BJ (cell line): ENCODE measurements at regions of chr1 and their contacts with region 1.

Region 1: DNA sequence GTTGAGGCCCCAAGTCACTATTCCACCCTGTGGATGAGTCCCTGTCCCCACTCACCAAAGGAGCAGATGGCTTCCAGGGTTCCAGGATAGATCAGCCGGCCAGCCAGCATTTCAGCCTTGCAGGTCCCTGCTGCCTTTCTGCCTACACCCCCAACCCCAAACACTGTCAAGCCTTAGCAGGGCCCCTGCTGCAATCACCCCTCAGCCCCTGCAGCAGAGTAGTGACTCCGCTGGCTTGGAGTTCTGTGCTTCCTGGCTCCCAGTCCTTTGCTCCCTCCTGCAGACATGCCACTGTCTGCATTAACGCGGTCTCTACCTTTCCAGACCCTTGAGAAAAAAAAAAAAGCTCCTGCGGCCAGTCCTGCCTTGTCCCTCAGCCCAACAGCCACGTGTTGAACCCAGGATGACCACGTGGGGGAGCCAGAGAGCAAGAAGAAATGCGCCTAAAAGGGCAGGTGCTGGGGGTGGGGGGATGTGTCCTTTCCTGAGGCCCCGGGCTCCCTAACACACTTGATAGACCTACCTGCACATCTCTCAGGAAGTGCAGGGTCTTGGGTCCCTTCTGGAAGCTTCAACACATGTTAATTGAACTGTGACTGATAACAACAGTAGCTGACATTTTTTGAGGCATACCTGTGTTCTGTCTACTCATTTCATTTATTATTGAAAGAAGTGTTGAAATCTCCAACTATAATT is 37.4 kb downstream of the RASSF5 start:
- DNase-seq: no peak
- H3K4me3 ChIP-seq: no peak overlapping the region
- H3K27me3 ChIP-seq: peaks cover 3% of the 10 kb centered on the region; the same call in 1 of the 2 replicates
- CTCF ChIP-seq: peak; percentile 94

Region 2: GRCh38 chr1:206489980-206490770 is 54.5 kb before region 1 on chr1:
- CTCF ChIA-PET with region 1: interaction called, 16 read pairs
- POLR2A ChIA-PET with region 1: no interaction called
- DNase-seq: no peak
- H3K4me3 ChIP-seq: no peak overlapping the region
- H3K27me3 ChIP-seq: no peaks in the 10 kb centered on the region; the same call in 1 of the 2 replicates
- CTCF ChIP-seq: peak; percentile 98

Region 3: DNA sequence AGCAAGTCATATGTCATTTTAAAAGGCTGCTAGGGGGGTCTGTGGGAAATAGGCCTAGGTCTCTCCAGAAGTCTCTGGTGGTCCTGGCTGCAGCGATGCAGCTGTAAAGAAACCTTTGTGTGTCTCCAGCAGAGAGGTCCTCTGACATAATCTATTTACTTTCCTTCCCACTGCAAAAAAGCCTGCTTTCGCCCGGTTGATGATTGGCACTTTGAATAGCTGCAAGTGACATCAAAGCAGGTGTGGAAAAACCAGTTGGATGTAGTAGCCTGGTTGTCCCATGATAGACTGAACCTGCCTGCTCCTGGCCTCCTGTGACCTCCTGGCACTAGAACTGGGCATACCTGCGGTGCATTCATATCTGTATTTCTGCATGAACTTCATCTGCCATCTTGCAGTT is 23.6 kb before region 1 on chr1:
- CTCF ChIA-PET with region 1: interaction called, 16 read pairs
- POLR2A ChIA-PET with region 1: no interaction called
- DNase-seq: no peak
- H3K4me3 ChIP-seq: no peak overlapping the region
- H3K27me3 ChIP-seq: no peaks in the 10 kb centered on the region; the same call in 1 of the 2 replicates
- CTCF ChIP-seq: no peak

Region 4: DNA sequence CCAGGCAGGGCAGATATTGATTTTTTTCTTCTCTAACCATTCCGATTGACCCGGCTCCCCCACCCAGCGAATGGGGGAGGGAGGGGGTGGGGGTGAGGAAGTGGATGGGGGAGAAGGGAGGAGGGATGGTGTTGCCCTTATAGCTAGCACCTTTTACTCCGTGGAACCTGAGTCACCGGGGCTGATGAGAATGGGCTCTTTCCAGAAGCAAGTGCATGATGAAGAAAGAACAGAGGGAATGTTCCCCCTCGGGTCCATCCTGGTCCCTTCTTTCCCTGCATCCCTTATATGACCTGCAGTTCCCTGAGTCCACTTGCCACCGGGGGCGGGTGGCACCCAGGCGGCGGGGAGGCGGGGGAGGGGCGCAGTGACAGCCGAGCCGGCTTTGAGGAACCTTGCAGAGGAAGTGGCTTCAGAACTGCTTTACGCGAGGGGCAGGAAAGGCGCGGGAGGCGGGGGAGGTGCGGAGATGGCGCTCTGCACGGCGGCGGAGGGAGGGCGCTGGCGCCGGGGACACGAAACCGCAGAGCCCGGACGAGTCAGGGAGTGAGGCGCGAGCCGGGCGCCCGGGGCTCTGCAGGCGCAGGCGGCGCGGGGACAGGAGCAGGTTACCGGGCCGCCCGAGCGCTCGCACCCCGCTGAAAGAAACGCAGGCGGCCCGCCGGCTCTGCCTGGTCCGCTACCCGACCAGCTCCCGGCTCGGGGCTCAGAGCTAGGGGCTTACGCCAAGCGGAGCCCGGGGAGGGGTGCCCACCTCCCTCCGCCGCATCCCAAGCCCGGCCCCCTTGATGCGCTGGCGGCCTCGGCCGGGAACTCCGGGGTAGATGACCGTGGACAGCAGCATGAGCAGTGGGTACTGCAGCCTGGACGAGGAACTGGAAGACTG is 12.3 kb after region 1 on chr1:
- CTCF ChIA-PET with region 1: interaction called, 48 read pairs
- POLR2A ChIA-PET with region 1: no interaction called
- DNase-seq: no peak
- H3K4me3 ChIP-seq: peak overlapping the region; percentile 46
- H3K27me3 ChIP-seq: peaks cover 4% of the 10 kb centered on the region
- CTCF ChIP-seq: no peak

Region 5: DNA sequence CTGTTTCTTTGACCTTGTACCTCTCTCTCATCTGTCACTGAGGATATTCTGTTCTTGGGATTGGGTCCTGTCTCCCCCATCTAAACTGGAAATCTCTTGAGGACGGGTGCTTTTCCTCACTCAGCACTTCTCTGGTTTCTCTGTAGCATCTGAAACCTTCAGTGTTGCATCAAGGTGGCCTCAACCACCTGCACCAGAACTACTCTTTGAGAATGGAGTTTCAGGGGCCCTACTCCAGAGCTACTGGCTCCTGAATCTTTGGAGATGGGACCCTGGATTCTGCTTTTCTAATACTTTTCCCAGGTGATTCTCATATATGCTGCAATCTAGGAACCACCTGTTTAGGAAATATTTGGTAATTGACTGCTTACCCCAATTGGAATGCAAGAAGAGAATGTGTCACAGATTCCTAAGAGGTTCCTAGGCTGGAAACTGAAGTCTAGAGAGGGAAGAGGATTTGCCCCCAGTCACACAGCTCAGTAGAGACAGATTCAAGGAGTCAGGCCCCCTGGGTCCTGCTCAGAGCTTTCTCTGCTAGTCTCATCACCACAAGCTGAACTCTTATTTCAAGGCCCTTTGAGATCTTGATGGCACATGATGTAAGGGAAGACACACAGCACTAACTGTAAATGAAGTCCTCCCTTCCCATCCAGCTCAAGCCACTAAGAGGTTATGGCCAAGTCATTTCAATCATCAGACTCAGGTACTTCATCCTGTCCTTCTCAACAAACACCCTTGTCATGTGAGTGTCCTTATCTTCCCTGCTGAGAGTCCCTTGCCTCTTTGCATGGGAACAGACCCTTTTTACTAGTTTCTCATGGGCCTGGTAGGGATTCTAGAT is 18.9 kb after region 1 on chr1:
- CTCF ChIA-PET with region 1: interaction called, 14 read pairs
- POLR2A ChIA-PET with region 1: no interaction called
- DNase-seq: no peak
- H3K4me3 ChIP-seq: no peak overlapping the region
- H3K27me3 ChIP-seq: peaks cover 2% of the 10 kb centered on the region
- CTCF ChIP-seq: no peak